ENCODE measurements at regions of chr17 and their contacts with region 1.

Region 1: DNA sequence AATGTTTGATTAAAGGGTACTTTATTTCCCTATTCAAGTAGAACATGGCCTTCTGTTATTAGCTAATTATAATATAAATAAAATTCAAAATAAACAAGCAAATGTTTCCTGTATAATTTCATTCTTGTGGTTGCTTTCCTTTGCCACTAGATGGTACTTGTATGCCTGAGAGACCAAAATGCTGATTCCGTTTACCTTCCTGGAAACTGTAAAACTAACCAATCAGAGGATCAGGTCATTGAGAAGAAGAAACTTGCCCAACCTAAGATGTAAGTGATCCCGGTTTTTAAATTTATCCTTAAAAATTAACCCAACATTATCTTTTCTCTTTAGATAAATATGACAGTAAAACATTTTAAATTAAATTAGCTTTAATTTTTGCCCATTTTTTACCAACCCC is 8.1 kb upstream of the ABCA5 start:
- DNase-seq: no peak
- H3K4me3 ChIP-seq: no peak overlapping the region
- H3K27ac ChIP-seq: no peak overlapping the region
- H3K4me1 ChIP-seq: no peaks in the 10 kb centered on the region
- H3K27me3 ChIP-seq: no peaks in the 10 kb centered on the region
- CTCF ChIP-seq: peak; percentile 26 to 42 (median 27)
- EP300 ChIP-seq: no peak
- POLR2A ChIP-seq: no peak

Region 2: DNA sequence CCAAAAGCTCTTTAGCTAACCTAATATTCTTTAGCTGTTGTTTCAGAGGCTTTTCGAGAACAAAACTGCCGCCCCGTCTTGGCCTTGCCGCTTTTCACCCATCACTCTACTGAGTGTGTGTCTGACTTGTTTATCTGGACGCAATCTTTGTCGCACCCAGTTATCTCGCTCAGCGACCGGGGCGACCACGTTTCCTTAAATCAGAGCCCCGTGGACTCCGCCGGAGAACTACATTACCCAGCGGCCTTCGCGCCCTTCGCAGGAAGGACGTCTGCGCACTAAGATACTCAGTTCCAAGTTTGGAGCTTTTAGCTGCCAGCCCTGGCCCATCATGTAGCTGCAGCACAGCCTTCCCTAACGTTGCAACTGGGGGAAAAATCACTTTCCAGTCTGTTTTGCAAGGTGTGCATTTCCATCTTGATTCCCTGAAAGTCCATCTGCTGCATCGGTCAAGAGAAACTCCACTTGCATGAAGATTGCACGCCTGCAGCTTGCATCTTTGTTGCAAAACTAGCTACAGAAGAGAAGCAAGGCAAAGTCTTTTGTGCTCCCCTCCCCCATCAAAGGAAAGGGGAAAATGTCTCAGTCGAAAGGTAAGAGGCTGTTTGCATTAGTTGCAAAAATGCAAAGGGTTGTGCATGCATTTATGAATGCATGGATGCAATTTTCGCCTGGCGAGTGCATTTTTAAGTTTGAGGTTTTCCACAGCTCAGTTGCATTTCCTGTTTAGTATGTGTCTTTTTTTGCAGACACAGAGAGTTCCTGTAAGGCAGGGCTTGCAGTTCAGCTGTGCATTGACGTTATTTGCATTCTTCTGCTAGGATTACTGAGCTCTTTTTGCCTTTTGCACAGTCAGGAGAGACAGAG is 79.6 kb after region 1 on chr17 and contains the start of gene MAP2K6:
- intact Hi-C with region 1: loop called (anchors 5 kb)
- DNase-seq: peak; percentile 95
- H3K4me3 ChIP-seq: peak within 1 kb of the TSS; percentile 49 to 66 (median 59)
- H3K27ac ChIP-seq: peak within 1 kb of the TSS; percentile 29 to 69 (median 50)
- H3K4me1 ChIP-seq: peaks cover 19 to 48% (median 39%) of the 10 kb centered on the region in 4 donors
- H3K27me3 ChIP-seq: no peaks in the 10 kb centered on the region
- CTCF ChIP-seq: no peak
- EP300 ChIP-seq: no peak
- POLR2A ChIP-seq: no peak
- total RNA-seq, gene MAP2K6: 0.83 to 3.1 (median 1.5) TPM

Region 3: GRCh38 chr17:69749911-69750310 is 414.9 kb after region 1 on chr17:
- intact Hi-C with region 1: no loop called
- DNase-seq: no peak
- H3K4me3 ChIP-seq: no peak overlapping the region
- H3K27ac ChIP-seq: no peak overlapping the region
- H3K4me1 ChIP-seq: no peaks in the 10 kb centered on the region
- H3K27me3 ChIP-seq: no peaks in the 10 kb centered on the region
- CTCF ChIP-seq: no peak
- EP300 ChIP-seq: no peak
- POLR2A ChIP-seq: no peak